Heart right ventricle (tissue), 16 donors: ENCODE measurements at regions of chr9 and their contacts with region 1.

Region 1: GRCh38 chr9:32413424-32413823 is 29.0 kb downstream of the ACO1 start:
- DNase-seq: no peak
- ATAC-seq: no peak
- H3K4me3 ChIP-seq: no peak overlapping the region
- H3K27ac ChIP-seq: no peak overlapping the region
- H3K4me1 ChIP-seq: no peaks in the 10 kb centered on the region
- H3K27me3 ChIP-seq: no peaks in the 10 kb centered on the region
- CTCF ChIP-seq: no peak

Region 2: GRCh38 chr9:31996322-31996721 is 417.1 kb before region 1 on chr9:
- intact Hi-C with region 1: no loop called
- DNase-seq: no peak
- ATAC-seq: no peak
- H3K4me3 ChIP-seq: no peak overlapping the region
- H3K27ac ChIP-seq: no peak overlapping the region
- H3K4me1 ChIP-seq: no peaks in the 10 kb centered on the region
- H3K27me3 ChIP-seq: no peaks in the 10 kb centered on the region
- CTCF ChIP-seq: no peak

Region 3: GRCh38 chr9:32463500-32464293 is 50.3 kb after region 1 on chr9:
- intact Hi-C with region 1: loop called in 2 of 10 experiments (anchors 10 kb)
- DNase-seq: no peak
- ATAC-seq: no peak
- H3K4me3 ChIP-seq: no peak overlapping the region
- H3K27ac ChIP-seq: no peak overlapping the region
- H3K4me1 ChIP-seq: no peaks in the 10 kb centered on the region
- H3K27me3 ChIP-seq: no peaks in the 10 kb centered on the region
- CTCF ChIP-seq: no peak

Region 4: GRCh38 chr9:34072868-34073590 is 1659.6 kb after region 1 on chr9:
- intact Hi-C with region 1: no loop called
- DNase-seq: no peak
- ATAC-seq: peak in 4 of 8 donors; percentile 26 to 69 (median 52)
- H3K4me3 ChIP-seq: no peak overlapping the region
- H3K27ac ChIP-seq: peak overlapping the region in 2 of 10 donors; percentile 8 to 10
- H3K4me1 ChIP-seq: peaks cover 0 to 6% (median 0%) of the 10 kb centered on the region in 9 donors
- H3K27me3 ChIP-seq: no peaks in the 10 kb centered on the region
- CTCF ChIP-seq: no peak